ENCODE measurements at regions of chr7 and their contacts with region 1.

Region 1: GRCh38 chr7:100889761-100890634 is 483 bp upstream of the UFSP1 start:
- DNase-seq: peak; percentile 51
- H3K4me3 ChIP-seq: peak overlapping the region; percentile 46
- H3K27me3 ChIP-seq: no peaks in the 10 kb centered on the region
- CTCF ChIP-seq: peak; percentile 8; the same call in 1 of the 2 replicates

Region 2: GRCh38 chr7:100101016-100101862 is 788.8 kb before region 1 on chr7 and contains the starts of genes AP4M1 and MCM7:
- CTCF ChIA-PET with region 1: no interaction called
- POLR2A ChIA-PET with region 1: interaction called, 17 read pairs
- DNase-seq: peak; percentile 94
- H3K4me3 ChIP-seq: peak within 1 kb of the TSS; percentile 61
- H3K27me3 ChIP-seq: no peaks in the 10 kb centered on the region
- CTCF ChIP-seq: no peak
- polyA plus RNA-seq, gene AP4M1: 14.3 and 15.2 TPM in 2 replicates
- polyA plus RNA-seq, gene MCM7: 53.8 and 89.0 TPM in 2 replicates

Region 3: DNA sequence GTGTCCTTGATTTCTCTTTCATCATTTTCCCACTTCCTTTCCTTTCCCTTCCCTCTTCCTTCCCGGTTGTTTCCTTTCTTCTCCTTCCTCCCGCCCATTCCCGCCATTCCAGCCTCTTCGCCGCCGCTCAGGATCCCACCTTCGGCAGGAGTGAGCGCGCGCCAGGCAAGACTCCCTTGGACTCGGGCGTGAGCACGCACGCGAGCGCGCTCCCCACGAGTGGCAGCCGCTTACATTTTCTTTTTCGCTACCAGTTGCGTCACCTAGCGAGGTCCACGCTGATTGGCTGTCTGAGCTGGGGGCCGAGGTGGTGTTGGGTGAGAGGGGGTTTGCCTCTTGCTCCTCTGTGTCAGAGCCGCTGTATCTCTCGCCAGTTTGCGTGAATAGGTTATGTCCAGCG is 144.8 kb before region 1 on chr7:
- CTCF ChIA-PET with region 1: no interaction called
- POLR2A ChIA-PET with region 1: no interaction called
- DNase-seq: no peak
- H3K4me3 ChIP-seq: peak overlapping the region; percentile 27
- H3K27me3 ChIP-seq: peaks cover 4% of the 10 kb centered on the region; the same call in 1 of the 2 replicates
- CTCF ChIP-seq: no peak

Region 4: DNA sequence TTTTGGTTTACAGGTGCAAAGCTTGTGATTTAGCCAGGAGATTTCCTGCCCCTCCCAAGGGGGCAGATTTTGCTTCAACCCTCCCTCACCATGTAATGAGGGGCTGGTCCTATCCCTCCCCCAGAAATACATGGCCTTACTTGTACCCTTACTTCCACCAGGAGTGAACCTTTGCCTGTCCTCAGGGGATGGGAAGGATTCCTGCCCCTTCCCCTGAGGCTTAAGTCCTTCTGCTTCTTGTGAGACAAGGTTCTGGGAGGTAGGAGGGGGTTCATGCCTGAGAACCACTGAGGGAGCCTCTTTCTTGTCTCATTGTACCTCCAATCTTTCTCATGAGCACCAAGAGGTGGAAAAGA is 39.8 kb after region 1 on chr7:
- CTCF ChIA-PET with region 1: no interaction called
- POLR2A ChIA-PET with region 1: no interaction called
- DNase-seq: no peak
- H3K4me3 ChIP-seq: no peak overlapping the region
- H3K27me3 ChIP-seq: peaks cover 3% of the 10 kb centered on the region; the same call in 1 of the 2 replicates
- CTCF ChIP-seq: no peak

Region 5: DNA sequence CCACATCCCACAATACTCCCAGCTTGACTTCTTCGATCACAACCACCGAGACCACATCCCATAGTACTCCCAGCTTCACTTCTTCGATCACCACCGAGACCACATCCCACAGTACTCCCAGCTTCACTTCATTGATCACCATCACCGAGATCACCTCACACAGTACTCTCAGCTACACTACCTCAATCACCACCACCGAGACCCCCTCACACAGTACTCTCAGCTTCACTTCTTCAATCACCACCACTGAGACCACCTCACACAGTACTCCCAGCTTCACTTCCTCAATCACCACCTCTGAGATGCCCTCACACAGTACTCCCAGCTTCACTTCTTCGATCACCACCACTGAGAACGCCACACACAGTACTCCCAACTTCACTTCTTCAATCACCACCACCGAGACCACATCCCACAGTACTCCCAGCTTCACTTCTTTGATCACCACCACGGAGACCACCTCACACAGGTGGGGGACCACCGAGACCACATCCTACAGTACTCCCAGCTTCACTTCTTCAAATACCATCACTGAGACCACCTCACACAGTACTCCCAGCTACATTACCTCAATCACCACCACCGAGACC is 67.9 kb after region 1 on chr7:
- CTCF ChIA-PET with region 1: no interaction called
- POLR2A ChIA-PET with region 1: interaction called, 16 read pairs
- DNase-seq: no peak
- H3K4me3 ChIP-seq: no peak overlapping the region
- H3K27me3 ChIP-seq: peaks cover 10% of the 10 kb centered on the region
- CTCF ChIP-seq: no peak

Region 6: GRCh38 chr7:101066141-101066832 is 176.3 kb after region 1 on chr7:
- CTCF ChIA-PET with region 1: interaction called, 19 read pairs
- POLR2A ChIA-PET with region 1: no interaction called
- DNase-seq: no peak
- H3K4me3 ChIP-seq: no peak overlapping the region
- H3K27me3 ChIP-seq: peaks cover 9% of the 10 kb centered on the region
- CTCF ChIP-seq: no peak

Region 7: DNA sequence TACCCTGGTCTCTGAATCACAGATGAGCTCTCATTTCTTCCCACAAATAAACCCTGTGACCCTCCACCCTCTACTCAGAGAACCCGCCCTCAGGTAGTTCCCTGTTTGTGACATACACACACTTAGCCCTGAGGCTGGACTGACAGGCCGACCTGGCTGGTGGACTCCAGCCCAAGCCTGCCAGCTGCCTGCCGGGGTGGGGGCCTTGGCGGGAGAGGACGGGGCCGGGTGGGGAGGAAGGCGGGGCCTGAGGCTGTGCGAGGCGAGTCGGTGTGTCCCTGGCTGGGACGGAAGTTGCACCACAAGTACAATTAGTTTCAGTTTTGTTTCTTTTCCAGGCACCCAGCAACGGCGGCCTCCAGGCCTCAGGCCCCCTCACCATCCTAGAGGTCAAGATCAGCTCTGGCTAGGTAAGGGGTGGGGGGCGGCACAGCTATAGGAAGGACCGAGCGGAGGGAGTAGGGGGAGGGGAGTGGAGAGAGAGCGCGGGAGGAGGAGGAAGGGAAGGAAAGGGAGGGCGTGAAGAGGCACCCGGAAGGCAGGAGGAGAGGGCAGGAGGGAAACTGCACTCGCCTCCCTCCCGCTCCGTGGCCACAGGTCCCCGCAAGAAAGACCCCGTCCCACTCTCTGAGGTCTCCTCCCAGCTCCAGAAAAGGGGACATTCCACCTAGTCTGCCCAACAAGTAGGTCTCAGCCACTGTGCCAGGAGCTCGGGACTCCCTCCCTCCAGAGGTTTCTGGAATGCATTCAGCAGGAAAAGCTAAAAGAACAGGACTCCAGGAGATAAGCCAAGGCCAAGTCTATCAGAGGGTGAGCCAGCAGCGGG is 195.4 kb after region 1 on chr7 and contains the start of gene TRIM56:
- CTCF ChIA-PET with region 1: interaction called, 16 read pairs
- POLR2A ChIA-PET with region 1: no interaction called
- DNase-seq: peak; percentile 27
- H3K4me3 ChIP-seq: peak within 1 kb of the TSS; percentile 95
- H3K27me3 ChIP-seq: no peaks in the 10 kb centered on the region
- CTCF ChIP-seq: no peak
- polyA plus RNA-seq, gene TRIM56: 3.2 and 4.9 TPM in 2 replicates

Measured in BJ (cell line).